Psoas muscle (tissue), 8 donors: ENCODE measurements at regions of chr5 and their contacts with region 1.

Region 1: DNA sequence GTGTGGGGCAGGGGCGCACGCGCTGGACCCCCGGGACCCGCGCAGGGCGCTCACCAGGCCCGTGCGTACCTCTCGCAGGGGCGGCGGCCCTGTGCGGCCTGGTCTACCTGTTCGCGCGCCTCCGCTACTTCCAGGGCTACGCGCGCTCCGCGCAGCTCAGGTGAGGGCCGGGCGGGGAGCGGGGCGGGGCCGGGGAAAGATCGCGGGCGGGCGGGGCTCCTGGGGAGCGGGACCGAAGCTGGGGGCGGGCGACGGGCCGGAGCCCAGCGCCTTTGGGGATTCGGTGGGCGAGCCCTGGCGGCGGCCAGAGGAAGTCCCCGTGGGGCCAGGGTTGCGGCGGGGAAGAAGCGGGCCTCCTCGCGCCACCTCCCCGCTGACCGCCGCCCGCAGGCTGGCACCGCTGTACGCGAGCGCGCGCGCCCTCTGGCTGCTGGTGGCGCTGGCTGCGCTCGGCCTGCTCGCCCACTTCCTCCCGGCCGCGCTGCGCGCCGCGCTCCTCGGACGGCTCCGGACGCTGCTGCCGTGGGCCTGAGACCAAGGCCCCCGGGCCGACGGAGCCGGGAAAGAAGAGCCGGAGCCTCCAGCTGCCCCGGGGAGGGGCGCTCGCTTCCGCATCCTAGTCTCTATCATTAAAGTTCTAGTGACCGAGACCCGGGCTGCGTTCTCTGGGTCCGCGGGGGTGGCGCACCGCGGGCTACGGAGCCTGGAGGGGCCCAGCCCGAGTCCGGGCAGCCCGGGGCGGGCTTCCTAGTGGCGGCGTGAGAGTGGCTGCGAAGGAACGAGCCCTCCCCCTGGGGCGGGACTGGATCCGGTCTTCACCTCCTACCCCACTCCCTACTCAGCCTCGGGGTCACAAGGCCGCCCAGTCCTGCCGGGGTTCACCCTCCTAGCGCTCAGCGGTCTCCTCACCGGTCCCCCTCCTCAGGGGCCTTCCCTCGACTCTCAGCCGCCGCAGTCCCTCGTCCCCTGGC is 2.4 kb downstream of the LTC4S start:
- DNase-seq: peak; percentile 86 to 90
- ATAC-seq: peak; percentile 80 to 86 (median 85)
- H3K4me3 ChIP-seq: peak overlapping the region; percentile 74
- H3K27ac ChIP-seq: peak overlapping the region; percentile 78
- H3K4me1 ChIP-seq: peaks cover 16% of the 10 kb centered on the region
- H3K27me3 ChIP-seq: no peaks in the 10 kb centered on the region
- CTCF ChIP-seq: peak; percentile 87

Region 2: DNA sequence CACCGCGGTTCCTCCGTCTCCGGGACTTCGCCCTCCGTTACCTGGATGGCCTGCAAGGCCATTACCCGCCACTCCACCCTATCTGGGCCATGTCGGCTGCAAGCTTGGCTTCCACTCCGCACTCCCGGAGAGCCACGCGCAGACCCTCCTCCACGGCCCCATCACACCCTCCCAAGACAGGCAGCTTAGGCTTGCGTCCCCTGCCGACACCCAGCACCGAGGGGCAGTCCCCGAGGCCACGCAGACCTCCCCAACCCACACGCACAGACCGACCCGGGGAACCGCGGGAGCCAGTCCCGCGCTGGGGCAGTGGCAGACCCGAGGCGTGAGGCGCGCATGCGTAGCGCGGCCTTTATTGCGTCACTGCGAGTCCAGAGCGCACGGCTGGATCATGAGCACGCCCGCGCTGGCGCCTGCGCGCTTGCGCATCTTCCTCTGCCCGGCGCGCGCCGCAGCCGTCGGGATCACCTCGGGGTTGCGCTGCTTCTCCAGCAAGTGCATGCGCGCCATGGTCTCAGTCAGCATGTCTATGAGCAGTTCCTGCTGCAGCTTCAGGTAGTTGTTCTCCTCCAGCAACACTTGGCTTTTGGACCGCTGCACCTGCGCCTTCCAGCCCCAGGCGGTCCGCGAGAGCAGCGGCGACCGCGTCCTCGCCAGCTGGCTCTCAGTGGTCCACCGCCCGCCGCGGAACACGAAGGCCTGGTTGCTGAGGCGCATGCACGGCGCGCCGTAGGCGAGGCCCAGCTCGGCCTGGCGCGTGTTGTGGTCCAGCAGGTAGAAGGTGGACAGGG is 117.7 kb before region 1 on chr5:
- intact Hi-C with region 1: no loop called
- DNase-seq: peak; percentile 97 to 98
- ATAC-seq: peak; percentile 97 to 99 (median 98)
- H3K4me3 ChIP-seq: peak overlapping the region; percentile 82
- H3K27ac ChIP-seq: peak overlapping the region; percentile 84
- H3K4me1 ChIP-seq: peaks cover 8% of the 10 kb centered on the region
- H3K27me3 ChIP-seq: no peaks in the 10 kb centered on the region
- CTCF ChIP-seq: no peak

Region 3: DNA sequence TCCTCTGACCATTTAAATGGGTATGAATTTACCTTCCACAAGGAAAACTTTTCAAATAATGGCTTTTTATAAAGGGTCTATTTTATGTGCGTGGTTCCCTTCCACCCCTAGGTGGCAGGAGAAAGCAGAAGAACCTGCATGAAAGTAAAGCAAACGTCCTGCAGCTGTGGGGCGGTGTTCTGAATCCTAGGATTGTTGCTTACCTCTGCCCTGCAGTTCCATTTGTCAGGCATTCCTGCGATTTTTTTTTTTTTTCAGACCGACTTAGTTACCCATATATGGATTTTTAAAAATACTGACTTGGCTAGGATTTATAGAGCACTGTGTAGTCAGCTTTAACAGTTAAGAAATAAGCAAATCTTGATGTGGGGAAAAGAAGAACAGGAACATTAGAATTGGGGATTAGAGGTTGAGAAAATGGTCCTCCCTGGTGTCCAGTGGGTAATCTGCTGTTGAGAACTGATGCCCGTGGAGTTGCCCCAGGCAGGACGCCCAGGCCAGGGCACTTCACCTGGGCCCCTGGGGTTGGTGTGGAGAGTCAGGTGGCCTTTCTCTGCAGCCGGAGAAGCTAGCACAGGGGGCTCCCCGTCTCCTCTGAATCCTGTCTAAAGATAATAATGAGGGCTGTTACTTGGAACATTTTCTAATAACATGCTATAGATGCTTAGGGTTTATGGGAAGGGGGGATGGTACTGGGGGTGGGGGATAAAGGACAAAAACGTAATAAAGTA is 32.8 kb before region 1 on chr5:
- intact Hi-C with region 1: loop called in 1 of 2 experiments (anchors 2 kb)
- DNase-seq: peak; percentile 47 to 56
- ATAC-seq: peak; percentile 49 to 78 (median 59)
- H3K4me3 ChIP-seq: no peak overlapping the region
- H3K27ac ChIP-seq: peak overlapping the region; percentile 53
- H3K4me1 ChIP-seq: peaks cover 61% of the 10 kb centered on the region
- H3K27me3 ChIP-seq: no peaks in the 10 kb centered on the region
- CTCF ChIP-seq: peak; percentile 86